Panc1 (cell line): ENCODE measurements at regions of chr1 and their contacts with region 1.

Region 1: GRCh38 chr1:59971464-59971911 is 44.9 kb upstream of the CYP2J2 start:
- DNase-seq: no peak
- ATAC-seq: peak; percentile 96
- H3K4me3 ChIP-seq: peak overlapping the region in 1 of 2 experiments; percentile 25; a peak in 2 of 4 replicates
- H3K27ac ChIP-seq: no peak overlapping the region
- H3K4me1 ChIP-seq: peaks cover 3% of the 10 kb centered on the region
- H3K27me3 ChIP-seq: peaks cover 9% of the 10 kb centered on the region
- CTCF ChIP-seq: peak; percentile 94

Region 2: DNA sequence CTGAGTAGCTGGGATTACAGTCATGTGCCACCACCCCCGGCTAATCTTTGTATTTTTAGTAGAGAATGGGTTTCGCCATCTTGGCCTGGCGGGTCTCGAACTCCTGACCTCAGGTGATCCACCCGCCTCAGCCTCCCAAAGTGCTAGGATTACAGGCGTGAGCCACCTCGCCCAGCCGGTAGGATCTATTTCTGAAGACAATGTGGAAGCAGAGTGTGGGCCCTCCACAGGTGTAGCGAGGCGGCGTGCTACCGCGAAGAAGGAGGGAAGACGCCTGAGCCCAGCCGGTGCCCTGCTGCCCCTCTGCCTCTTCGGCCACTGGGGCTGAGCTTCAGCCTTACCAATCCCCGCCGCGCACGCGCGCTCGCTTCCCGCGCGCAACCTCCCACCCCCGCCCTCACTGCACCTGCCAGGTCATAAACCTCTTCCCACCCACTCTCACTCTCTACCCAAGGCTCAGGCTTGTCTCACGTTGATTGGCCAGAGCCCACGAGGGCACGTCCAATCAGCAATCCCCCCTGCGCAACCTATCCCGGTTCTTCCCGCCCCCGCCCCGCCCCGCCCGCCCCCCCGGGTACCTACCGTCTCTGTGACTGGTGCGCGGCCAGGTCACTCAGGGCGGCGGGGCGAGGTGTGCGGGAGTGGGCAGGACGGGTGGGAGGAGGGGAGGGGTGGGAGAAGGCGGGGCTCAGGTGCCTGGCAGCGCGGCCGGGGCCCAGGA is 157.1 kb before region 1 on chr1:
- CTCF ChIA-PET with region 1: no interaction called
- POLR2A ChIA-PET with region 1: no interaction called
- in situ Hi-C with region 1: no loop called
- intact Hi-C with region 1: no loop called
- DNase-seq: no peak
- ATAC-seq: peak; percentile 89
- H3K4me3 ChIP-seq: peak overlapping the region; percentile 30 to 43
- H3K27ac ChIP-seq: no peak overlapping the region
- H3K4me1 ChIP-seq: peaks cover 6% of the 10 kb centered on the region; the same call in 1 of the 2 replicates
- H3K27me3 ChIP-seq: peaks cover 34% of the 10 kb centered on the region
- CTCF ChIP-seq: no peak

Region 3: GRCh38 chr1:60126723-60127122 is 155.2 kb after region 1 on chr1:
- CTCF ChIA-PET with region 1: no interaction called
- POLR2A ChIA-PET with region 1: no interaction called
- in situ Hi-C with region 1: no loop called
- intact Hi-C with region 1: loop called (anchors 10 kb)
- DNase-seq: no peak
- ATAC-seq: no peak
- H3K4me3 ChIP-seq: no peak overlapping the region
- H3K27ac ChIP-seq: no peak overlapping the region
- H3K4me1 ChIP-seq: no peaks in the 10 kb centered on the region
- H3K27me3 ChIP-seq: 0 out of 2 replicates have a peak, but pooled peaks cover 2% of the 10 kb centered on the region
- CTCF ChIP-seq: peak; percentile 9; the same call in 1 of the 2 replicates

Region 4: GRCh38 chr1:61424382-61424781 is 1452.9 kb after region 1 on chr1:
- CTCF ChIA-PET with region 1: interaction called, 12 read pairs
- POLR2A ChIA-PET with region 1: no interaction called
- in situ Hi-C with region 1: no loop called
- intact Hi-C with region 1: no loop called
- DNase-seq: no peak
- ATAC-seq: no peak
- H3K4me3 ChIP-seq: no peak overlapping the region
- H3K27ac ChIP-seq: no peak overlapping the region
- H3K4me1 ChIP-seq: no peaks in the 10 kb centered on the region
- H3K27me3 ChIP-seq: no peaks in the 10 kb centered on the region
- CTCF ChIP-seq: no peak